Activated CD4-positive, alpha-beta T cell treated with anti-CD3 and anti-CD28 coated beads for 36 hours (primary cell): ENCODE measurements at regions of chr4 and their contacts with region 1.

Region 1: GRCh38 chr4:109574102-109574850 is 14.2 kb downstream of the MCUB start:
- DNase-seq: no peak
- ATAC-seq: peak; percentile 57
- H3K4me3 Mint-ChIP-seq: peak overlapping the region; percentile 31
- H3K27ac Mint-ChIP-seq: peak overlapping the region; percentile 67
- H3K4me1 Mint-ChIP-seq: peaks cover 71% of the 10 kb centered on the region
- H3K27me3 Mint-ChIP-seq: no peaks in the 10 kb centered on the region

Region 2: GRCh38 chr4:109419679-109420078 is 154.6 kb before region 1 on chr4:
- CTCF ChIA-PET with region 1: no interaction called
- POLR2A ChIA-PET with region 1: no interaction called
- intact Hi-C with region 1: no loop called
- DNase-seq: no peak
- ATAC-seq: no peak
- H3K4me3 Mint-ChIP-seq: no peak overlapping the region
- H3K27ac Mint-ChIP-seq: no peak overlapping the region
- H3K4me1 Mint-ChIP-seq: peaks cover 3% of the 10 kb centered on the region
- H3K27me3 Mint-ChIP-seq: no peaks in the 10 kb centered on the region

Region 3: GRCh38 chr4:109472343-109472761 is 101.9 kb before region 1 on chr4:
- CTCF ChIA-PET with region 1: no interaction called
- POLR2A ChIA-PET with region 1: no interaction called
- intact Hi-C with region 1: no loop called
- DNase-seq: no peak
- ATAC-seq: peak; percentile 85
- H3K4me3 Mint-ChIP-seq: no peak overlapping the region
- H3K27ac Mint-ChIP-seq: peak overlapping the region; percentile 17
- H3K4me1 Mint-ChIP-seq: peaks cover 50% of the 10 kb centered on the region
- H3K27me3 Mint-ChIP-seq: no peaks in the 10 kb centered on the region

Region 4: GRCh38 chr4:109588176-109588575 is 13.9 kb after region 1 on chr4:
- CTCF ChIA-PET with region 1: interaction called, 10 read pairs
- POLR2A ChIA-PET with region 1: interaction called, 9 read pairs
- intact Hi-C with region 1: loop called in 1 of 2 experiments (anchors 1 kb)
- DNase-seq: peak; percentile 82
- ATAC-seq: peak; percentile 99
- H3K4me3 Mint-ChIP-seq: peak overlapping the region; percentile 11
- H3K27ac Mint-ChIP-seq: peak overlapping the region; percentile 86
- H3K4me1 Mint-ChIP-seq: peaks cover 84% of the 10 kb centered on the region
- H3K27me3 Mint-ChIP-seq: no peaks in the 10 kb centered on the region